ENCODE measurements at regions of chr9 and their contacts with region 1.

Region 1: DNA sequence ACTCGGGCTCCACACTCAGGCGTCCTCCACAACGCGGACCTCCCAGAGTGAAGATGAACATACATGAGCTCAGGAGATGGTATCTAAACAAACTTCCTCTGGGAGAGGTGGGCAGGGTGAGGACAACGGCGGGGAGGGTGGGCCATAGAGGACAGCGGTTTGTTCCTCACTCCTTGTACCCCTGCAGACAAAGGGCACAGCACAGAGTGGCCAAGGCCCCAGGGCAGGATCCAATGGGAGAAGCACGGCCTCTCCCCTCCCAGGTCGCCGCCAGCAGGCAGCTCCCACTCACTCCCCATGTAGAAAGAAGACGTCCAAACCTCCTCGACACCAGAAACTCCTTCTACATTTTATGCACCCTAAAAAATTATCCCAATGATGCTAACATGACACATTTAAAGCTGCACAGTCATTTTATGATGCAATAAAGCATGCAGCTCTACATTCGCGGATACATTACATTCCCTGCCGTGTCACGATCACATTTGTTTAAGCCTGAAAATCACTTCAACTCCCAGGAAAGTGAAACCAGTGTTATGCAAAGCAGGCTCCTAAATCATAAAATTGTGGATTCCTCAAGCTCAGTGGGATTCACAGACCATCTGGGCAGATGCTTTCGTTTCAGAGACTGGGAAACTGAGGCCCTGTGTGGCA is 87.5 kb upstream of the SARDH start:
- DNase-seq: peak; percentile 30 to 61 (median 43)
- H3K4me3 ChIP-seq: no peak overlapping the region
- H3K4me3 Mint-ChIP-seq: no peak overlapping the region
- H3K27ac ChIP-seq: peak overlapping the region in 1 of 2 donors; percentile 49
- H3K27ac Mint-ChIP-seq: peak overlapping the region in 6 of 7 donors; percentile 26 to 69 (median 48)
- H3K4me1 ChIP-seq: peaks cover 17 to 40% of the 10 kb centered on the region in 2 donors
- H3K4me1 Mint-ChIP-seq: peaks cover 37% of the 10 kb centered on the region
- H3K27me3 ChIP-seq: no peaks in the 10 kb centered on the region
- H3K27me3 Mint-ChIP-seq: peaks cover 0 to 4% (median 0%) of the 10 kb centered on the region in 3 donors
- CTCF ChIP-seq: no peak

Region 2: DNA sequence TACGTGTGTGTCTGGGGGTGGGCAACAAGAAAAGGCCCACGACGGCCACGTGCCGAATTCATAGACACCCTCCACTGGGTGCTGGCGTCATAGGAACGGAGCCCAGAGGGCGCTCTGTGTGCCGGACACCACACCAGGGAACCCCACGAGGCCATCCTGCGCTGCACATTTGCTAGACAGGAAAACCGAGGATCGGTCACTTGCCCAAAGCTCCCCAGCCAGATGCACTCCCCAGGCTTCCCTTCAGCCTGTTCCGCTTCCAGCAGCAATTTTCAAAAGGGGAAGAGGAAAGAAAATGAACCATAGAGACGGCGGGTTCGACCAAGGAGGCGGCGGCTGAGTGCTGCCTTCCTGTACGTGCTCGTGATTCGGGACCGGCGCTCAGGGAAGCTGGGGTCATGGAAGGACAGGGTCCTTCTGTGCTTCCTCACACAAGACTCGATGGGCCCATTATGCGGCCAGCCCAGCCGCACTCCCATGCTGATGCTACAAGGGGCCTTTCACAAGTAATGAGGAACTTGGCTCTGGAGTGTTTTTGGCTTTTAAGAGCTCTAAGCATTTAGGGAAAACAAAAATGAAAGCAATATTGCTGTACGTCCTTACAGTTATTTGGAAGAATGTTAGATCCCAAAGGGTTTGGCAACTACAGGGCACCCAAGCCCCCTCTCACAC is 37.0 kb after region 1 on chr9:
- intact Hi-C with region 1: loop called in 1 of 2 experiments (anchors 5 kb)
- DNase-seq: peak; percentile 90 to 94 (median 92)
- H3K4me3 ChIP-seq: peak overlapping the region in 2 of 3 experiments; percentile 8 to 64
- H3K4me3 Mint-ChIP-seq: peak overlapping the region; percentile 68 to 81
- H3K27ac ChIP-seq: peak overlapping the region; percentile 95 to 97
- H3K27ac Mint-ChIP-seq: peak overlapping the region; percentile 95 to 98 (median 97)
- H3K4me1 ChIP-seq: peaks cover 39 to 54% of the 10 kb centered on the region in 2 donors
- H3K4me1 Mint-ChIP-seq: peaks cover 50% of the 10 kb centered on the region
- H3K27me3 ChIP-seq: no peaks in the 10 kb centered on the region
- H3K27me3 Mint-ChIP-seq: peaks cover 0 to 1% (median 0%) of the 10 kb centered on the region in 3 donors
- CTCF ChIP-seq: no peak